Naive thymus-derived CD4-positive, alpha-beta T cell (primary cell): ENCODE measurements at regions of chr14 and their contacts with region 1.

Region 1: GRCh38 chr14:94080471-94081289 is at the start of gene DDX24:
- DNase-seq: peak; percentile 92 to 97 (median 96)
- ATAC-seq: peak; percentile 99
- H3K4me3 ChIP-seq: peak within 1 kb of the TSS; percentile 74
- H3K4me3 Mint-ChIP-seq: peak within 1 kb of the TSS; percentile 90 to 100 (median 99)
- H3K27ac ChIP-seq: peak within 1 kb of the TSS; percentile 98
- H3K27ac Mint-ChIP-seq: peak within 1 kb of the TSS; percentile 97 to 100 (median 99)
- H3K4me1 ChIP-seq: peaks cover 32 to 38% of the 10 kb centered on the region in 2 donors
- H3K4me1 Mint-ChIP-seq: peaks cover 28 to 60% (median 53%) of the 10 kb centered on the region in 7 donors
- H3K27me3 ChIP-seq: no peaks in the 10 kb centered on the region
- H3K27me3 Mint-ChIP-seq: no peaks in the 10 kb centered on the region
- total RNA-seq, gene DDX24: 214 to 438 (median 333) TPM

Region 2: DNA sequence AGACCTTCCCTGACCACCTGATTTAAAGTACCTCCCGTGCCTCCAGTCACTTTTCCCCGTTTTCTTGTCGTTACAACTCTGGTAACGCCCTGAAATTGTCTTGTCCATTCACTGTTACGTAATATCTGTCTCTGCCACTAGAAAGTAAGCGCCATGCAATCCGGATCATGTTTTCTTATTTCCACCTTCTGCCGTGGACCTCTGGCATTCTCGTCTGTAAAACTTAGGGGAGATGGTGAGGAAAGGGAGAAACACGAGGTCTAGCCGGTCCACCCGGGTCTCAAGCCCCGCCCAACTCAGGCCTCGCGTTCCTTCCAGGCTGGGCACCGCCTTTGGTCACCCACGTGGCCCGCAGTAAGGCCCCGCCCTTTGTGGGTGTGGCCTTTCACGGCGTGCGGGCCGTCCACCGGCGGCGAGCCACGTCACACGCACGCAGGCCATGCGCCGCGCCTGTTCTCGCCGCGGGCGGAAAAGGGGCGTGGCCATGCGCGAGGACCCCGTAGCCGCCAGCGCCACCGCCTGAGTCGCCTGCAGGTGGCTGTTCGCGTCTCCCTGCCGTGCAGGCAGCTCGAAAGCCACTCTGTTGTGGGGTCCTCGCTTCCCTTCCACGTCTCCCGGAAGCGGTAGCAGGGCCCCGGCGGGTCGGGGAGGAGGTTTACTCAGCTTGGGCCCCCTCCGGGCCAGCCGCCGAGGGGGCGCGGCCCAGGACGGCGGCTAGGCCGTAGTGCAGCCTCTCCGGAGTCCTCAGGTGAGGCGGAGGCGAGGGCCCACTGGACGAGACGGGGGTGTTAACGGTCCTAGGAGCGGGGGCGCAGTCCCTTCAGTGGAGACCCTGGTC is 1286.8 kb before region 1 on chr14 and contains the start of gene GOLGA5:
- CTCF ChIA-PET with region 1: no interaction called
- POLR2A ChIA-PET with region 1: no interaction called
- intact Hi-C with region 1: loop called in 1 of 2 experiments (anchors 2 kb)
- DNase-seq: peak; percentile 97 to 100 (median 99)
- ATAC-seq: peak; percentile 97
- H3K4me3 ChIP-seq: peak within 1 kb of the TSS; percentile 98
- H3K4me3 Mint-ChIP-seq: peak within 1 kb of the TSS; percentile 78 to 96 (median 92)
- H3K27ac ChIP-seq: peak within 1 kb of the TSS; percentile 91
- H3K27ac Mint-ChIP-seq: peak within 1 kb of the TSS; percentile 78 to 98 (median 95)
- H3K4me1 ChIP-seq: peaks cover 15 to 20% of the 10 kb centered on the region in 2 donors
- H3K4me1 Mint-ChIP-seq: peaks cover 24 to 45% (median 39%) of the 10 kb centered on the region in 7 donors
- H3K27me3 ChIP-seq: no peaks in the 10 kb centered on the region
- H3K27me3 Mint-ChIP-seq: peaks cover 0 to 9% (median 0%) of the 10 kb centered on the region in 5 donors
- total RNA-seq, gene GOLGA5: 9.7 to 25.8 (median 23.5) TPM

Region 3: GRCh38 chr14:93959239-93960107 is 121.2 kb before region 1 on chr14:
- CTCF ChIA-PET with region 1: no interaction called
- POLR2A ChIA-PET with region 1: interaction called, 5 read pairs
- intact Hi-C with region 1: loop called (anchors 1 to 5 kb)
- DNase-seq: peak; percentile 59 to 93 (median 76)
- ATAC-seq: peak; percentile 87
- H3K4me3 ChIP-seq: peak overlapping the region; percentile 23
- H3K4me3 Mint-ChIP-seq: peak overlapping the region; percentile 57 to 87 (median 72)
- H3K27ac ChIP-seq: no peak overlapping the region
- H3K27ac Mint-ChIP-seq: peak overlapping the region; percentile 49 to 100 (median 85)
- H3K4me1 ChIP-seq: peaks cover 74 to 99% of the 10 kb centered on the region in 2 donors
- H3K4me1 Mint-ChIP-seq: peaks cover 63 to 96% (median 87%) of the 10 kb centered on the region in 7 donors
- H3K27me3 ChIP-seq: no peaks in the 10 kb centered on the region
- H3K27me3 Mint-ChIP-seq: no peaks in the 10 kb centered on the region

Region 4: DNA sequence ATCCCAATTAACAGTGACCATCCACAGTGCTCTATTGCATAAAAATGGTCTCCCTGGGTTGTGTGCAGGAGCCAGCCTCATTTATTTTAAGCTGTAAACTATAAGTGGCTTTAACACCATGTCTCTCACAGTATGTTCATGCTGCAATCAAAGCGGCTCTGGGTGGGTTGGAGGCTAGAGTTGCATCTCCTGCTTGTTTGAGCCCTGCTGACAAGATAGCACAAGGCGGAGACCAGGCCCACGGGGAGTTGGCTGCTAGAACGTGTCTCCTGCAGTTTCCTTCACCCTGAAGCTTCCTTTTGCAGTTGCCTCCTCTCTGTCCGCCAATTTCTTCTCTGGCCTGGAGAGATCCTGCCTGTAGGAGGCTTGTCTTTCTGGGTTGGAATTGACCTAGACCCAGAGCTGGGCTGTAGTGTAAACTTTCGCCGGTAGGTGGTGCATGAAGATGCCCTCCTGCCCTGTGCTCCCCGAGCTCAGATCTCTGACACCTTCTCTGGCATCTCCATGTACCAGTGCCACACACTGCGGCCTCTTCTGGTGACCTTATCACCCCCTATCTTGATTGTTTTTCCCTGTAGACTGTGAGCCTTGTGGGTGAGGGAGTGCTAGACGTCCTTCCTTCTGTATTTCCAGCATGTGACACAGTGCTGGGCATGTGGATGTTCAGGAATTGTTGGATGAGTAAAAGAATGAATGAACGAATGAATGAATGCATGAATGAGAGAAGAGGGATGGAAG is 44.2 kb before region 1 on chr14:
- CTCF ChIA-PET with region 1: interaction called, 10 read pairs
- POLR2A ChIA-PET with region 1: no interaction called
- intact Hi-C with region 1: loop called in 1 of 2 experiments (anchors 2 kb)
- DNase-seq: peak; percentile 40 to 77 (median 64)
- ATAC-seq: peak; percentile 90
- H3K4me3 ChIP-seq: no peak overlapping the region
- H3K4me3 Mint-ChIP-seq: no peak overlapping the region
- H3K27ac ChIP-seq: no peak overlapping the region
- H3K27ac Mint-ChIP-seq: peak overlapping the region in 2 of 9 donors; percentile 8 to 78
- H3K4me1 ChIP-seq: no peaks in the 10 kb centered on the region
- H3K4me1 Mint-ChIP-seq: peaks cover 3 to 8% (median 4%) of the 10 kb centered on the region in 7 donors
- H3K27me3 ChIP-seq: no peaks in the 10 kb centered on the region
- H3K27me3 Mint-ChIP-seq: no peaks in the 10 kb centered on the region

Region 5: GRCh38 chr14:94129111-94129757 is 48.6 kb after region 1 on chr14 and contains the start of gene IFI27L2:
- CTCF ChIA-PET with region 1: interaction called, 6 read pairs
- POLR2A ChIA-PET with region 1: interaction called, 29 read pairs
- intact Hi-C with region 1: loop called (anchors 1 kb)
- DNase-seq: peak in 8 of 9 donors; percentile 26 to 69 (median 40)
- ATAC-seq: peak; percentile 95
- H3K4me3 ChIP-seq: peak within 1 kb of the TSS; percentile 84
- H3K4me3 Mint-ChIP-seq: peak within 1 kb of the TSS; percentile 71 to 97 (median 87)
- H3K27ac ChIP-seq: peak within 1 kb of the TSS; percentile 65
- H3K27ac Mint-ChIP-seq: peak within 1 kb of the TSS; percentile 41 to 92 (median 72)
- H3K4me1 ChIP-seq: peaks cover 12 to 21% of the 10 kb centered on the region in 2 donors
- H3K4me1 Mint-ChIP-seq: peaks cover 16 to 24% (median 18%) of the 10 kb centered on the region in 7 donors
- H3K27me3 ChIP-seq: no peaks in the 10 kb centered on the region
- H3K27me3 Mint-ChIP-seq: peaks cover 0 to 22% (median 0%) of the 10 kb centered on the region in 5 donors
- total RNA-seq, gene IFI27L2: 17.2 to 65.8 (median 26.5) TPM

Region 6: DNA sequence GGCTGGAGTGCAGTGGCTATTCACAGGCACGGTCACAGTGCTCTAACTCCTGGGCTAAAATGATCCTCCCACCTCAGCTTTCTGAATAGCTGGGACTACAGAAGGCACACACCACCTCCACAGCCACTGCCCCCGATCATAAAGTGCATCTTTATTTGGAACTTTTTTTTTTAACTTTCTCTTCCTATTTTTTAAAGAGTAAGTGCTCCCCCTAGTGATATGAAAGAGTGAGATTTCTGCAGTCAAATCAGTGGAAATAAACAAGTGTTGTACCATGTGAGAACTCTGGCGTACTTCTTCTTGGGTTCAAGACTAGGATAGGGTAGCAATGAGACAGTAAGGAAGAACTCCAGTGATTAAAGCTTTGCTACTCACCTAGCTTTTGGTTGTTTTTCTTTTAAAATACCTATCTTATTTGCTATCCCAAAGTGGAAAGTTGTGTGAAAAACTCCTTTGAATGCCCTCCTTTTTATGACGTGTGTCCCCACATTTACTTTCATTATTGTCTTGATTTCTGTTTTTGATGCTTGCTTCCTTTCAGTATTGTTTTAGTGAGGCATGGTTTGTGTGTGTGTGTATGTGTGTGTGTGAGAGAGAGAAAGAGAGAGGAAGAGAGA is 100.1 kb after region 1 on chr14:
- CTCF ChIA-PET with region 1: interaction called, 4 read pairs
- POLR2A ChIA-PET with region 1: interaction called, 16 read pairs
- intact Hi-C with region 1: loop called (anchors 2 kb)
- DNase-seq: peak in 7 of 9 donors; percentile 57 to 81 (median 71)
- ATAC-seq: peak; percentile 93
- H3K4me3 ChIP-seq: peak overlapping the region; percentile 5
- H3K4me3 Mint-ChIP-seq: peak overlapping the region in 8 of 10 donors; percentile 6 to 75 (median 50)
- H3K27ac ChIP-seq: peak overlapping the region; percentile 56
- H3K27ac Mint-ChIP-seq: peak overlapping the region in 8 of 9 donors; percentile 16 to 90 (median 74)
- H3K4me1 ChIP-seq: peaks cover 0 to 1% of the 10 kb centered on the region in 2 donors
- H3K4me1 Mint-ChIP-seq: peaks cover 10 to 23% (median 18%) of the 10 kb centered on the region in 7 donors
- H3K27me3 ChIP-seq: no peaks in the 10 kb centered on the region
- H3K27me3 Mint-ChIP-seq: peaks cover 0 to 36% (median 0%) of the 10 kb centered on the region in 5 donors